CD4-positive, alpha-beta memory T cell (primary cell): ENCODE measurements at regions of chr15 and their contacts with region 1.

Region 1: GRCh38 chr15:52481915-52482314 is 46.8 kb downstream of the MYO5A start:
- DNase-seq: peak; percentile 84 to 90 (median 85)
- H3K4me3 ChIP-seq: no peak overlapping the region
- H3K4me3 Mint-ChIP-seq: peak overlapping the region; percentile 57 to 86 (median 65)
- H3K27ac ChIP-seq: peak overlapping the region; percentile 44
- H3K27ac Mint-ChIP-seq: peak overlapping the region; percentile 67 to 97 (median 91)
- H3K4me1 ChIP-seq: peaks cover 88% of the 10 kb centered on the region
- H3K4me1 Mint-ChIP-seq: peaks cover 62 to 87% (median 69%) of the 10 kb centered on the region in 4 donors
- H3K27me3 ChIP-seq: no peaks in the 10 kb centered on the region
- H3K27me3 Mint-ChIP-seq: no peaks in the 10 kb centered on the region

Region 2: DNA sequence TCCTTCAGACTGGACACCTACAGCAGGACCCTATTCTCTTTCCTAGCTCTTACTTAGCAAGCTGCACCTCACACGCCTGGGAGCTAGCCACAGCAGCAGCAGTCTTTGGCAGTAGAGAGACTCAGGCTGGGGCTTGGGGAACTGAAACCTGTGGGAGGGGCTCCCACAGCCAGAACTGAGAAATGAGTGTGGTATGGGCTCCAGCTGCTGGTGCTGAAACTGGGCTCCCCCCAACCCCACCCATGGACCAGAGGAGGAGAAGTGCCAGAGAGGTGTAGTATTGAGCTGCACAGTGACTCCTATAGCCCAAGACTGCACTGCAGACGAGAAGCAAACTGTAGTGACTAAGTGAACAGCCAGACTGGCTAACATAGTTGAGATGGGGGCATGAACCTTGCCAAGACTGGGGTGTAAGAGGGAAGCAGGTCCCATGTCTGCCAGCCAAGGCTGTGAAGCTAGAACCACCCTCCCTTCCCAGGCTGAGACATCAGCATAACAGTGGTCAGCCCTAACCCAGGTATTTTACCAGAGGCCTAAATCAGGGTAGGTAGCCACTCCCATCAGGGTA is 15.7 kb before region 1 on chr15:
- CTCF ChIA-PET with region 1: interaction called, 10 read pairs
- POLR2A ChIA-PET with region 1: interaction called, 29 read pairs
- intact Hi-C with region 1: loop called (anchors 1 kb)
- DNase-seq: peak in 3 of 5 donors; percentile 8 to 49 (median 17)
- H3K4me3 ChIP-seq: no peak overlapping the region
- H3K4me3 Mint-ChIP-seq: peak overlapping the region in 4 of 8 donors; percentile 9 to 39 (median 28)
- H3K27ac ChIP-seq: peak overlapping the region; percentile 35
- H3K27ac Mint-ChIP-seq: peak overlapping the region; percentile 26 to 95 (median 87)
- H3K4me1 ChIP-seq: peaks cover 47% of the 10 kb centered on the region
- H3K4me1 Mint-ChIP-seq: peaks cover 43 to 65% (median 53%) of the 10 kb centered on the region in 4 donors
- H3K27me3 ChIP-seq: no peaks in the 10 kb centered on the region
- H3K27me3 Mint-ChIP-seq: no peaks in the 10 kb centered on the region

Region 3: GRCh38 chr15:52568601-52569256 is 86.8 kb after region 1 on chr15 and contains the start of gene ARPP19:
- CTCF ChIA-PET with region 1: no interaction called
- POLR2A ChIA-PET with region 1: interaction called, 7 read pairs
- intact Hi-C with region 1: loop called (anchors 5 kb)
- DNase-seq: peak; percentile 78 to 84 (median 80)
- H3K4me3 ChIP-seq: peak within 1 kb of the TSS; percentile 64 to 80
- H3K4me3 Mint-ChIP-seq: peak within 1 kb of the TSS; percentile 94 to 100 (median 96)
- H3K27ac ChIP-seq: peak within 1 kb of the TSS; percentile 98
- H3K27ac Mint-ChIP-seq: peak within 1 kb of the TSS; percentile 98 to 100 (median 100)
- H3K4me1 ChIP-seq: peaks cover 44% of the 10 kb centered on the region
- H3K4me1 Mint-ChIP-seq: peaks cover 31 to 46% (median 38%) of the 10 kb centered on the region in 4 donors
- H3K27me3 ChIP-seq: no peaks in the 10 kb centered on the region
- H3K27me3 Mint-ChIP-seq: no peaks in the 10 kb centered on the region
- total RNA-seq, gene ARPP19: 105 to 130 TPM

Region 4: GRCh38 chr15:52679232-52680040 is 197.5 kb after region 1 on chr15 and contains the start of gene ATOSA:
- CTCF ChIA-PET with region 1: no interaction called
- POLR2A ChIA-PET with region 1: interaction called, 5 read pairs
- intact Hi-C with region 1: loop called (anchors 5 kb)
- DNase-seq: peak; percentile 91 to 96 (median 92)
- H3K4me3 ChIP-seq: peak within 1 kb of the TSS; percentile 55 to 82
- H3K4me3 Mint-ChIP-seq: peak within 1 kb of the TSS; percentile 93 to 99 (median 99)
- H3K27ac ChIP-seq: peak within 1 kb of the TSS; percentile 97
- H3K27ac Mint-ChIP-seq: peak within 1 kb of the TSS; percentile 93 to 100 (median 100)
- H3K4me1 ChIP-seq: peaks cover 61% of the 10 kb centered on the region
- H3K4me1 Mint-ChIP-seq: peaks cover 28 to 80% (median 41%) of the 10 kb centered on the region in 4 donors
- H3K27me3 ChIP-seq: no peaks in the 10 kb centered on the region
- H3K27me3 Mint-ChIP-seq: no peaks in the 10 kb centered on the region
- total RNA-seq, gene ATOSA: 95.6 to 97.1 TPM

Region 5: GRCh38 chr15:52730173-52730572 is 248.3 kb after region 1 on chr15:
- CTCF ChIA-PET with region 1: interaction called, 3 read pairs
- POLR2A ChIA-PET with region 1: no interaction called
- intact Hi-C with region 1: loop called (anchors 5 kb)
- DNase-seq: peak; percentile 57 to 75 (median 73)
- H3K4me3 ChIP-seq: no peak overlapping the region
- H3K4me3 Mint-ChIP-seq: peak overlapping the region in 5 of 8 donors; percentile 16 to 64 (median 41)
- H3K27ac ChIP-seq: no peak overlapping the region
- H3K27ac Mint-ChIP-seq: peak overlapping the region; percentile 51 to 91 (median 80)
- H3K4me1 ChIP-seq: peaks cover 16% of the 10 kb centered on the region
- H3K4me1 Mint-ChIP-seq: peaks cover 8 to 21% (median 14%) of the 10 kb centered on the region in 4 donors
- H3K27me3 ChIP-seq: no peaks in the 10 kb centered on the region
- H3K27me3 Mint-ChIP-seq: peaks cover 0 to 2% of the 10 kb centered on the region in 2 donors